ENCODE measurements at regions of chr2 and their contacts with region 1.

Region 1: GRCh38 chr2:137467246-137467862 is 496.9 kb upstream of the HNMT start:
- DNase-seq: no peak
- H3K4me3 Mint-ChIP-seq: no peak overlapping the region
- H3K27ac Mint-ChIP-seq: no peak overlapping the region
- H3K4me1 Mint-ChIP-seq: no peaks in the 10 kb centered on the region
- H3K27me3 Mint-ChIP-seq: no peaks in the 10 kb centered on the region

Region 2: GRCh38 chr2:137838255-137839092 is 371.1 kb after region 1 on chr2:
- CTCF ChIA-PET with region 1: interaction called, 11 read pairs
- POLR2A ChIA-PET with region 1: no interaction called
- DNase-seq: no peak
- H3K4me3 Mint-ChIP-seq: no peak overlapping the region
- H3K27ac Mint-ChIP-seq: no peak overlapping the region
- H3K4me1 Mint-ChIP-seq: no peaks in the 10 kb centered on the region
- H3K27me3 Mint-ChIP-seq: no peaks in the 10 kb centered on the region